ENCODE measurements at regions of chr15 and their contacts with region 1.

Region 1: GRCh38 chr15:73633111-73633990 is at the start of gene NPTN:
- DNase-seq: peak; percentile 98
- H3K4me3 ChIP-seq: peak within 1 kb of the TSS; percentile 59 to 78 (median 74)
- H3K27ac ChIP-seq: peak within 1 kb of the TSS; percentile 96
- H3K4me1 ChIP-seq: peaks cover 58% of the 10 kb centered on the region
- H3K27me3 ChIP-seq: no peaks in the 10 kb centered on the region
- CTCF ChIP-seq: no peak
- total RNA-seq, gene NPTN: 118 to 143 TPM

Region 2: GRCh38 chr15:73240866-73241499 is 392.4 kb before region 1 on chr15:
- CTCF ChIA-PET with region 1: no interaction called
- dilution Hi-C with region 1: no loop called
- in situ Hi-C with region 1: no loop called
- intact Hi-C with region 1: loop called (anchors 2 kb)
- DNase-seq: peak; percentile 44
- H3K4me3 ChIP-seq: no peak overlapping the region
- H3K27ac ChIP-seq: no peak overlapping the region
- H3K4me1 ChIP-seq: no peaks in the 10 kb centered on the region
- H3K27me3 ChIP-seq: no peaks in the 10 kb centered on the region
- CTCF ChIP-seq: peak; percentile 83 to 92

Region 3: DNA sequence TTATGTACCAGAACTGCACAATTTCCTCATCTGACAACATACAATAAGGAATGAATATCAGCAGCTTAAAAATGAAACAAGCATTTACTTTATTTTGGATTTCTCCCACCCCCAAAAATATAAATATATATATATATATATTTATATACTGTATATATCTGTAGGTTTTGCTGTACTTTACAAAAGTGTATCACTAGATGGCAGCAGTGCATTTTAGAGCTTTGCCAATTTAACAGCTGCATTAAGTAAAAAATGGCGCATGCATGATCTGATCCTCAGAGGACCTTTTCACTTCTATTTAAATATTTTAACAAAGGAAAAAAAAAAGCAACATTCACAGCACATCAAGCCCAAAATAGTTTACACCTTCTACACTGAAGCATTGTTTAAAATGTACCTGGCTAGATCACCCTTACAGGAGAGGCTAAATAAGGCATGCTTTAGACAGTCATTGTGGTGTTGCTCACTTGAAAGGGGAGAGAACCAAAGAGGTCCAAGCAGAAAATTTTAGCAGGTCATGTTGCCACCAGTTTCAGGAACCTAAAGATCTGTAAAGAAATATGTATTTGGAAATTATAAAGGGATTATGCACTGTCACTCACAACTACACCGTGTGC is 72.7 kb before region 1 on chr15:
- CTCF ChIA-PET with region 1: interaction called, 10 read pairs
- dilution Hi-C with region 1: no loop called
- in situ Hi-C with region 1: no loop called
- intact Hi-C with region 1: loop called (anchors 1 kb)
- DNase-seq: peak; percentile 51
- H3K4me3 ChIP-seq: no peak overlapping the region
- H3K27ac ChIP-seq: no peak overlapping the region
- H3K4me1 ChIP-seq: peaks cover 8% of the 10 kb centered on the region
- H3K27me3 ChIP-seq: no peaks in the 10 kb centered on the region
- CTCF ChIP-seq: peak; percentile 36 to 49

Region 4: GRCh38 chr15:73601451-73602445 is 31.6 kb before region 1 on chr15:
- CTCF ChIA-PET with region 1: no interaction called
- dilution Hi-C with region 1: loop called (anchors 5 kb)
- in situ Hi-C with region 1: no loop called
- intact Hi-C with region 1: loop called (anchors 1 kb)
- DNase-seq: peak; percentile 42
- H3K4me3 ChIP-seq: no peak overlapping the region
- H3K27ac ChIP-seq: peak overlapping the region; percentile 78
- H3K4me1 ChIP-seq: peaks cover 51% of the 10 kb centered on the region
- H3K27me3 ChIP-seq: no peaks in the 10 kb centered on the region
- CTCF ChIP-seq: no peak

Region 5: DNA sequence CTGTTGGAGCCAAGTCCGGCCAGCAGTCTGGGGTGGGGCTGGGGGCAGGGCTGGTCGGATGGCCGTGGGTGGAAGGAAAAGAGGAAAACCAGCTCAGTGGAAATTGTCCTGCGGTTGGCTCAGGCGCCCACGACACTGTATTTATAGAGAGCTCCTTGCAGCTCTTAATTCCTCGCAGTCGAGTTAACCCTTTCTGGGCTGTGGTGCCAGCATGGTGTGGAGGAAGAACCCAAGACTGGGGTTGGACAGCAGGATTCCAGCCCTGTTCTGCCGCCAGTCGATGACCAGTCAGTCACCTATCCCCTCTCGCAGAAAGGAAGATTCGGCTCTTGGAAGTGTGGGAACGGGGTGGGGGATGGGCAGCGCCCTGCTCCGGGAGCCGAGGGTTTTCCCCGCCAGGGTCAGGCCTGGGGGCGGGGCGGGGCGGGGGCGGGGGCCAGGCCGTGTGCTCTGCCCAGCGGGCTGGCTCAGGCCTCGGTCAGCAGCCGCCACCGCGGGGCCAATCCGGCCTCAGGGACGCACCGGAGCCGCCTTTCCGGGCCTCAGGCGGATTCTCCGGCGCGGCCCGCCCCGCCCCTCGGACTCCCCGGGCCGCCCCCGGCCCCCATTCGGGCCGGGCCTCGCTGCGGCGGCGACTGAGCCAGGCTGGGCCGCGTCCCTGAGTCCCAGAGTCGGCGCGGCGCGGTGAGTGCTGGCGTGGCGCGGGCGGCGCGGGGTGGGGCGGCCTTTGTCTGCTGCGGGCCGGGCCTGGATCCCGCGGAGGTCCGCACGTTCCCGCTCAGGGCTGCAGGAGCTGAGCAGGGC is 50.6 kb after region 1 on chr15 and contains the start of gene CD276:
- CTCF ChIA-PET with region 1: interaction called, 4 read pairs
- dilution Hi-C with region 1: no loop called
- in situ Hi-C with region 1: no loop called
- intact Hi-C with region 1: loop called (anchors 2 kb)
- DNase-seq: peak; percentile 55
- H3K4me3 ChIP-seq: peak within 1 kb of the TSS; percentile 71 to 87 (median 84)
- H3K27ac ChIP-seq: peak within 1 kb of the TSS; percentile 54
- H3K4me1 ChIP-seq: peaks cover 37% of the 10 kb centered on the region
- H3K27me3 ChIP-seq: no peaks in the 10 kb centered on the region
- CTCF ChIP-seq: no peak
- total RNA-seq, gene CD276: 50.5 to 110 TPM

Region 6: GRCh38 chr15:73697033-73697467 is 63.7 kb after region 1 on chr15:
- CTCF ChIA-PET with region 1: interaction called, 8 read pairs
- dilution Hi-C with region 1: loop called (anchors 5 kb)
- in situ Hi-C with region 1: loop called (anchors 5 kb)
- intact Hi-C with region 1: loop called (anchors 1 kb)
- DNase-seq: peak; percentile 94
- H3K4me3 ChIP-seq: no peak overlapping the region
- H3K27ac ChIP-seq: no peak overlapping the region
- H3K4me1 ChIP-seq: peaks cover 30% of the 10 kb centered on the region
- H3K27me3 ChIP-seq: no peaks in the 10 kb centered on the region
- CTCF ChIP-seq: no peak

Region 7: GRCh38 chr15:73908030-73908821 is 274.9 kb after region 1 on chr15:
- CTCF ChIA-PET with region 1: interaction called, 3 read pairs
- dilution Hi-C with region 1: no loop called
- in situ Hi-C with region 1: no loop called
- intact Hi-C with region 1: loop called (anchors 1 kb)
- DNase-seq: peak; percentile 45
- H3K4me3 ChIP-seq: no peak overlapping the region
- H3K27ac ChIP-seq: no peak overlapping the region
- H3K4me1 ChIP-seq: no peaks in the 10 kb centered on the region
- H3K27me3 ChIP-seq: no peaks in the 10 kb centered on the region
- CTCF ChIP-seq: peak; percentile 90 to 97

Region 8: DNA sequence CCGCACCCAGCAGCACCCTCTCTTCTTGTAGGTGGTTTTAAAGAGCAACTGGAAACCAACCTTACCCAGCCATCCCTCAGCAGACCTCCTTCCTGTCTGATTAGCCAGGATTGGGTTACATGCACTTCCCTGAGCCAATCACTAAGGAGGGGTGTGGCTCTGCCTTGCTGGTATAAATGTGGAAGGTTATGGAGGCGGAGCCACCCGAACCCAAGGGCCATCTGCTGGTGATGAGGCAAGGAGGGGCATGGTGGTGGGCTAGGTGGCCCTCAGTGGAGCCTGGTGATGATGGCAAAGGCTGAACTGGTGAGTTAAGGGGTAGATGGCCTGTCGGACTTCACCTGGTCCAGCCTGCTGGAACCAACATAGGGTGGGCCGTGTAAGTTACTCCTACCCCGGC is 642.6 kb after region 1 on chr15:
- CTCF ChIA-PET with region 1: no interaction called
- dilution Hi-C with region 1: no loop called
- in situ Hi-C with region 1: no loop called
- intact Hi-C with region 1: no loop called
- DNase-seq: no peak
- H3K4me3 ChIP-seq: no peak overlapping the region
- H3K27ac ChIP-seq: no peak overlapping the region
- H3K4me1 ChIP-seq: no peaks in the 10 kb centered on the region
- H3K27me3 ChIP-seq: peaks cover 1% of the 10 kb centered on the region
- CTCF ChIP-seq: no peak

Measured in mammary epithelial cell (primary cell).